ENCODE measurements at regions of chr17 and their contacts with region 1.

Region 1: GRCh38 chr17:74784125-74784810 is 8.1 kb upstream of the NAT9 start:
- DNase-seq: no peak
- ATAC-seq: no peak
- H3K4me3 Mint-ChIP-seq: no peak overlapping the region
- H3K27ac Mint-ChIP-seq: peak overlapping the region; percentile 13
- H3K4me1 Mint-ChIP-seq: peaks cover 54% of the 10 kb centered on the region
- H3K27me3 Mint-ChIP-seq: no peaks in the 10 kb centered on the region

Region 2: GRCh38 chr17:74402048-74402447 is 382.2 kb before region 1 on chr17:
- CTCF ChIA-PET with region 1: no interaction called
- POLR2A ChIA-PET with region 1: interaction called, 10 read pairs
- intact Hi-C with region 1: no loop called
- DNase-seq: no peak
- ATAC-seq: no peak
- H3K4me3 Mint-ChIP-seq: no peak overlapping the region
- H3K27ac Mint-ChIP-seq: no peak overlapping the region
- H3K4me1 Mint-ChIP-seq: no peaks in the 10 kb centered on the region
- H3K27me3 Mint-ChIP-seq: no peaks in the 10 kb centered on the region

Region 3: GRCh38 chr17:74801896-74802295 is 17.6 kb after region 1 on chr17:
- CTCF ChIA-PET with region 1: no interaction called
- POLR2A ChIA-PET with region 1: no interaction called
- intact Hi-C with region 1: no loop called
- DNase-seq: no peak
- ATAC-seq: no peak
- H3K4me3 Mint-ChIP-seq: no peak overlapping the region
- H3K27ac Mint-ChIP-seq: no peak overlapping the region
- H3K4me1 Mint-ChIP-seq: no peaks in the 10 kb centered on the region
- H3K27me3 Mint-ChIP-seq: no peaks in the 10 kb centered on the region

Measured in activated CD4-positive, alpha-beta T cell treated with anti-CD3 and anti-CD28 coated beads for 36 hours (primary cell).